ENCODE measurements at regions of chr7 and their contacts with region 1.

Region 1: DNA sequence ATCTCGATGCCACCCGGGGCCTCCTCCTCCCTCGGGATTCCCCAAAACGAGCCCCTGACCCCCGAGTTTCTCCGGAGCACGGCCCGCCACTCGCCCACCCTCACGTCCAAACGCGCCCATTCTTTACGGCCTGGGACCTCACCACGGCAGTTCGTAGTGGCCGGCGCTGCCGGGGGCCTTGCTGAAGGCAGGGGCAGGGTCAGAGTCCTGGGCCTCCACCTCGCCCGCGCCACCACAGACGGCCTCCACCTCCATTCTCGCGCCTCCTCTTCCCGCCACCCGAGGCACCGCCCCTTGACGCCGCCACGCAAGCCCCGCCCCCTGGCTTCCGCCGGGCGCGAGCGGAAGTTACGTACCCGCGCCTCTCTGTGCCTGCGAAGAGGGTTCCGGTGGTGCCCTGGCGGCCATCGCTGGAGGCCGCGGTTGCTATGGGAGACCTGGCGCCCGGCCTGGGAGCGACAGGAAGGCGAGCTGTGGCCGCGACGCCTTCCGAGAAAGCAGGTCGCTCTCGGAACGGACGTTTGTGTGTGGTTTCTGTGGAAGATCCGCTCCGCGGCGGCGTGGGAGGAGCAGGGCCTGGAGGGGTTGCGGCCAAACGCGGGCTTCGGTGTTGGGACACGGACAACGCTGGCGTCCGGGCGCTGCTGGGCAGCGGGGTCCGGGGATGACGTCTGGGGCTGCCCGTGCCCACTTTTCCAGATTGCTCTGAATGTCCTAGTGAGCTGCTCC is at the start of gene RFC2:
- DNase-seq: peak; percentile 92 to 100 (median 98)
- ATAC-seq: peak; percentile 99
- H3K4me3 ChIP-seq: peak within 1 kb of the TSS; percentile 93
- H3K4me3 Mint-ChIP-seq: peak within 1 kb of the TSS; percentile 90 to 97 (median 94)
- H3K27ac ChIP-seq: peak within 1 kb of the TSS; percentile 90
- H3K27ac Mint-ChIP-seq: peak within 1 kb of the TSS; percentile 92 to 97 (median 95)
- H3K4me1 ChIP-seq: peaks cover 6 to 8% of the 10 kb centered on the region in 2 donors
- H3K4me1 Mint-ChIP-seq: peaks cover 0 to 37% (median 27%) of the 10 kb centered on the region in 7 donors
- H3K27me3 ChIP-seq: no peaks in the 10 kb centered on the region
- H3K27me3 Mint-ChIP-seq: no peaks in the 10 kb centered on the region
- total RNA-seq, gene RFC2: 12.0 to 51.7 (median 15.2) TPM

Region 2: GRCh38 chr7:74083117-74083876 is 171.0 kb before region 1 on chr7 and contains the start of gene LIMK1:
- CTCF ChIA-PET with region 1: no interaction called
- POLR2A ChIA-PET with region 1: interaction called, 4 read pairs
- intact Hi-C with region 1: loop called (anchors 1 to 5 kb)
- DNase-seq: peak; percentile 71 to 90 (median 83)
- ATAC-seq: peak; percentile 98
- H3K4me3 ChIP-seq: peak within 1 kb of the TSS; percentile 44
- H3K4me3 Mint-ChIP-seq: peak within 1 kb of the TSS; percentile 66 to 89 (median 80)
- H3K27ac ChIP-seq: peak within 1 kb of the TSS; percentile 69
- H3K27ac Mint-ChIP-seq: peak within 1 kb of the TSS in 8 of 9 donors; percentile 18 to 89 (median 76)
- H3K4me1 ChIP-seq: peaks cover 7 to 11% of the 10 kb centered on the region in 2 donors
- H3K4me1 Mint-ChIP-seq: peaks cover 0 to 18% (median 9%) of the 10 kb centered on the region in 7 donors
- H3K27me3 ChIP-seq: no peaks in the 10 kb centered on the region
- H3K27me3 Mint-ChIP-seq: no peaks in the 10 kb centered on the region
- total RNA-seq, gene LIMK1: 11.0 to 19.7 (median 14.1) TPM

Region 3: GRCh38 chr7:74206589-74207120 is 47.6 kb before region 1 on chr7:
- CTCF ChIA-PET with region 1: interaction called, 3 read pairs
- POLR2A ChIA-PET with region 1: no interaction called
- intact Hi-C with region 1: loop called (anchors 2 kb)
- DNase-seq: peak; percentile 55 to 87 (median 72)
- ATAC-seq: peak; percentile 86
- H3K4me3 ChIP-seq: no peak overlapping the region
- H3K4me3 Mint-ChIP-seq: peak overlapping the region in 9 of 10 donors; percentile 12 to 55 (median 19)
- H3K27ac ChIP-seq: no peak overlapping the region
- H3K27ac Mint-ChIP-seq: peak overlapping the region in 2 of 9 donors; percentile 6 to 55
- H3K4me1 ChIP-seq: peaks cover 5 to 6% of the 10 kb centered on the region in 2 donors
- H3K4me1 Mint-ChIP-seq: peaks cover 14 to 29% (median 19%) of the 10 kb centered on the region in 7 donors
- H3K27me3 ChIP-seq: no peaks in the 10 kb centered on the region
- H3K27me3 Mint-ChIP-seq: peaks cover 0 to 6% (median 4%) of the 10 kb centered on the region in 5 donors

Region 4: GRCh38 chr7:74289018-74289658 is 34.8 kb after region 1 on chr7 and contains the start of gene CLIP2:
- CTCF ChIA-PET with region 1: no interaction called
- POLR2A ChIA-PET with region 1: interaction called, 3 read pairs
- intact Hi-C with region 1: loop called (anchors 1 to 5 kb)
- DNase-seq: peak; percentile 38 to 77 (median 64)
- ATAC-seq: peak; percentile 92
- H3K4me3 ChIP-seq: peak within 1 kb of the TSS; percentile 79
- H3K4me3 Mint-ChIP-seq: peak within 1 kb of the TSS; percentile 85 to 91 (median 90)
- H3K27ac ChIP-seq: peak within 1 kb of the TSS; percentile 40
- H3K27ac Mint-ChIP-seq: peak within 1 kb of the TSS in 7 of 9 donors; percentile 69 to 80 (median 76)
- H3K4me1 ChIP-seq: peaks cover 15 to 20% of the 10 kb centered on the region in 2 donors
- H3K4me1 Mint-ChIP-seq: peaks cover 13 to 24% (median 18%) of the 10 kb centered on the region in 7 donors
- H3K27me3 ChIP-seq: no peaks in the 10 kb centered on the region
- H3K27me3 Mint-ChIP-seq: peaks cover 0 to 39% (median 0%) of the 10 kb centered on the region in 5 donors
- total RNA-seq, gene CLIP2: 1.1 to 11.4 (median 3.1) TPM

Region 5: DNA sequence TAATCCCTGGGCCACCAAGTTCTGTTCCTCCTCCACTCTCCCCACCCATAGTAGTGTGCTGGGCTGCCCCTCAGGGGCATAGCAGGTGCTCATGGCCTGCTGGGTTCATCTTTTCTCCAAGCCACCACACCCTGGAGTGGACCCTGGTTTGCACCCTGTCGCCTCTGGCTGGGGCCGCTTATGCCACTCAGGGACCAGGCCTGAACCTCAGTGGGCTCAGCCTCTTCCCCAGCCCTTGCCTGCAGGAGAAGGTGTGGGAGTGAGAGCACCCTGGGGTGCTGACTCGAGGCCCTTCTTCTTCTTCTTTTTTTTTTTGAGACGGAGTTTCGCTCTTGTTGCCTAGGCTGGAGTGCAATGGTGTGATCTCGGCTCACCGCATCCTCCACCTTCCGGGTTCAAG is 45.1 kb after region 1 on chr7:
- CTCF ChIA-PET with region 1: no interaction called
- POLR2A ChIA-PET with region 1: no interaction called
- intact Hi-C with region 1: no loop called
- DNase-seq: no peak
- ATAC-seq: no peak
- H3K4me3 ChIP-seq: no peak overlapping the region
- H3K4me3 Mint-ChIP-seq: no peak overlapping the region
- H3K27ac ChIP-seq: no peak overlapping the region
- H3K27ac Mint-ChIP-seq: no peak overlapping the region
- H3K4me1 ChIP-seq: no peaks in the 10 kb centered on the region
- H3K4me1 Mint-ChIP-seq: no peaks in the 10 kb centered on the region
- H3K27me3 ChIP-seq: no peaks in the 10 kb centered on the region
- H3K27me3 Mint-ChIP-seq: no peaks in the 10 kb centered on the region

Region 6: DNA sequence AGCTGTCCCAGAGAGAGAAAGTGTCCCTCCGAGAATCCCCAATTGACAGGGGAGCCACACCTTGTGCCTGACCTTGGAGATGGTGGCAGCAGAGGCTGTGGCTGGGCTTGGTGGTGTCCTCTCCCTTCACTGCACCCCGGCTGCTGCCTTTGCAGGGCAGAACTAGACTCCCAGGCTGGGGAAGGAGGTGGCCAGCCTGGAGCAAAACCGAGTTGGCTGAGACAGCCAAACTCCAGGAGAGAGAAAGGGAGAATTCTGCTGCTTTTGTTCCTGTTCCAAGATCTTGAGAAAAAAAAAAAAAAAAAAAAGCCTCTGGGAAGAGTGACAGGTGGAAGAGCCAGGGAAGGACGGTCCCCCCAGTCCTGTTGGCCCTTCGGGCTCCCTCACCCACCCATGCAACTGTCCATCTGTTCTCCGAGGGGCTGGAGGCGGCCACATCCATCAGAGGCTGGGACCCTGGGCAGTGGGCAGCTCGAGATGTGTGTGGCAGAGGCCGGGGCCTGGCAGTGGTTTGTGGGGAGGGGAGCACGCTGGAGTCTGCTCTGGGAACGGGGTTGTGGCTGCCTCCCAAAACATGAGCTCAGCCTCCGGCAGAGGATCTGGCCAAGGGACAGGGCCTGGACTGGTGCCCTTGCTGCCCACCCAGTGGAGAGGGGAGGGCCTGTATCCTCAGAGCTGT is 70.4 kb after region 1 on chr7:
- CTCF ChIA-PET with region 1: no interaction called
- POLR2A ChIA-PET with region 1: no interaction called
- intact Hi-C with region 1: no loop called
- DNase-seq: no peak
- ATAC-seq: no peak
- H3K4me3 ChIP-seq: no peak overlapping the region
- H3K4me3 Mint-ChIP-seq: no peak overlapping the region
- H3K27ac ChIP-seq: no peak overlapping the region
- H3K27ac Mint-ChIP-seq: no peak overlapping the region
- H3K4me1 ChIP-seq: no peaks in the 10 kb centered on the region
- H3K4me1 Mint-ChIP-seq: peaks cover 0 to 3% (median 0%) of the 10 kb centered on the region in 7 donors
- H3K27me3 ChIP-seq: no peaks in the 10 kb centered on the region
- H3K27me3 Mint-ChIP-seq: no peaks in the 10 kb centered on the region

Measured in naive thymus-derived CD4-positive, alpha-beta T cell (primary cell).